SK-N-SH (cell line): ENCODE measurements at regions of chr7 and their contacts with region 1.

Region 1: GRCh38 chr7:25389489-25390106 is 161.3 kb upstream of the NPVF start:
- DNase-seq: peak; percentile 68
- H3K4me3 ChIP-seq: no peak overlapping the region
- H3K27ac ChIP-seq: no peak overlapping the region
- H3K4me1 ChIP-seq: peaks cover 0 to 20% of the 10 kb centered on the region in 2 experiments; a peak in 2 of 4 replicates
- H3K27me3 ChIP-seq: no peaks in the 10 kb centered on the region
- CTCF ChIP-seq: peak; percentile 73
- EP300 ChIP-seq: no peak
- RAD21 ChIP-seq: peak; percentile 88

Region 2: GRCh38 chr7:24366876-24367275 is 1022.7 kb before region 1 on chr7:
- CTCF ChIA-PET with region 1: no interaction called
- POLR2A ChIA-PET with region 1: no interaction called
- DNase-seq: no peak
- H3K4me3 ChIP-seq: no peak overlapping the region
- H3K27ac ChIP-seq: no peak overlapping the region
- H3K4me1 ChIP-seq: peaks cover 0 to 2% of the 10 kb centered on the region in 2 experiments; a peak in 1 of 4 replicates
- H3K27me3 ChIP-seq: peaks cover 9% of the 10 kb centered on the region; the same call in 1 of the 2 replicates
- CTCF ChIP-seq: no peak
- EP300 ChIP-seq: no peak
- RAD21 ChIP-seq: no peak

Region 3: GRCh38 chr7:25250386-25250785 is 139.2 kb before region 1 on chr7:
- CTCF ChIA-PET with region 1: interaction called, 526 read pairs
- POLR2A ChIA-PET with region 1: no interaction called
- DNase-seq: no peak
- H3K4me3 ChIP-seq: no peak overlapping the region
- H3K27ac ChIP-seq: no peak overlapping the region
- H3K4me1 ChIP-seq: no peaks in the 10 kb centered on the region; a peak in 1 of 4 replicates
- H3K27me3 ChIP-seq: no peaks in the 10 kb centered on the region
- CTCF ChIP-seq: no peak
- EP300 ChIP-seq: no peak
- RAD21 ChIP-seq: no peak

Region 4: DNA sequence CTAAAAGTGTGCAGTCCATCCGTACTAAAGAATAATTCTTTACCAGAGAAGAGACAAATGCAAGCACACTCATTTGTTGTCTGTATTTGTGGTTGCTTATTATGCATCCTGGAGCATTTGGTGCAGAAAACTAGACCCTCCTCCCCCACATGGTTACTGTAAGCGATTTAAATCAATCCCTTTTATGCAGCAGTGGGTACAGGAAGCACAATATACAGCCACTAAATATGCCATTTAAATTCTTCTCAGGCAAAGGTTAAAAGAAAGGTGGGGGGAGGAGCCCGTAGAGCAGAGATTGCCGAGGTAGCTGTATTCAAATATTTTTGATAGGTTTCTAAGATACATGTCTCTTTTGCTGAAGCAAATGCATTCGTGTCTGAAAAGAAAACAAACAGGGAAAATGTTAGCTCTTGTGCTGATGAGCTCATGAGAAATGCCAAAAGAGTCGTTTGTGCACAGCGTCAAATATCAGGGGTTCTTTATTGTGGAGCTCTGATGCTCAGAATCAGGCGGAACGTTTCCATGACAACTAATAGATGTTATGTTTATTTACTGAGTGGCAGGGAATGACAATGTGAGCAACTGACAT is 30.0 kb before region 1 on chr7:
- CTCF ChIA-PET with region 1: interaction called, 61 read pairs
- POLR2A ChIA-PET with region 1: no interaction called
- DNase-seq: peak; percentile 62
- H3K4me3 ChIP-seq: no peak overlapping the region
- H3K27ac ChIP-seq: no peak overlapping the region
- H3K4me1 ChIP-seq: peaks cover 0 to 11% of the 10 kb centered on the region in 2 experiments; a peak in 2 of 4 replicates
- H3K27me3 ChIP-seq: no peaks in the 10 kb centered on the region
- CTCF ChIP-seq: no peak
- EP300 ChIP-seq: no peak
- RAD21 ChIP-seq: no peak

Region 5: GRCh38 chr7:25402532-25402931 is 12.9 kb after region 1 on chr7:
- CTCF ChIA-PET with region 1: interaction called, 24 read pairs
- POLR2A ChIA-PET with region 1: no interaction called
- DNase-seq: no peak
- H3K4me3 ChIP-seq: no peak overlapping the region
- H3K27ac ChIP-seq: no peak overlapping the region
- H3K4me1 ChIP-seq: peaks cover 0 to 9% of the 10 kb centered on the region in 2 experiments; a peak in 2 of 4 replicates
- H3K27me3 ChIP-seq: no peaks in the 10 kb centered on the region
- CTCF ChIP-seq: no peak
- EP300 ChIP-seq: no peak
- RAD21 ChIP-seq: no peak

Region 6: GRCh38 chr7:25545124-25546008 is 155.8 kb after region 1 on chr7:
- CTCF ChIA-PET with region 1: interaction called, 19 read pairs
- POLR2A ChIA-PET with region 1: no interaction called
- DNase-seq: peak; percentile 65
- H3K4me3 ChIP-seq: no peak overlapping the region
- H3K27ac ChIP-seq: peak overlapping the region in 1 of 2 experiments; percentile 28; a peak in 2 of 4 replicates
- H3K4me1 ChIP-seq: peaks cover 0 to 15% of the 10 kb centered on the region in 2 experiments; a peak in 1 of 4 replicates
- H3K27me3 ChIP-seq: no peaks in the 10 kb centered on the region
- CTCF ChIP-seq: no peak
- EP300 ChIP-seq: no peak
- RAD21 ChIP-seq: no peak